ENCODE measurements at regions of chr10 and their contacts with region 1.

Region 1: DNA sequence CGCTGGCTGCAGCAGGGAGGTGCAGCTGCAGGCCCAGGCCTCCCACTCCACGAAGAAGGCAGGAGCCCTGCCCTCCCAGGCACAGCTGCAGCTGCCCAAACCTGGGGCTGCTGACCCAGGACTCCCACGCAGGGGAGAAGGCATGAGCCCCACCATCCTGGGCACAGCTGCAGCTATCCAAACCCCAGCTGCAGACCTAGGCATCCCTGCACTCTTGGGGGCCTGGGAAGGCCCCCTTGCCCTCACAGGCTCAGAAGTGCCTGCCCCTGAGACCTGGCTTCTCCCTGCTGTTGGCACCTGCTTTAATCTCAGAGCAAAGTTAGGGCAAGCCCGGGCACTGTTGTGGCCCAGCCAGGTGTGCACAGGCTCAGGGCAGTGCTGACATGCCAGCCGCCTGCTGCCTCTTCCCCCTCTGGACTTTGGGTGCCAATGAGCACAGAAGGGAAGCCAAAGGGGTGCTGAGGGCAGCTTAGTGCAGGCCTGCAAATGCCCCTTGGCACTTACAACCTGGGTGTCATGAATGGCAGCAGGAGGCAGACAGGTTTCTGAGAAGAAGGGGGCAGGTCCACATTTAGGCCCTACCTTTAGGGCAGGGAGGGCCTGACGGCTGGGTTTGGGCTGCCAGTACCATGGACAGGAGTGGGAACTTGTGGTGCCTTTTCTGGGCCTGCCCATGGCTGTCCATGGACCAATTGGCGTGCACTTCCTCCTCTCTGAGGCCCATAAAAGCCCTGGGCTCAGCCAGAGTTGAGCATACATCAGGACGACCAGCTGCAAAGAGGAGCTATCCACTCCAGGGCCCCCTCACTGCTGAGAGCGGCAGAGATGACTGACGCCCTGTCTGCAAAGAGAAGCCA is 31.1 kb downstream of the CRTAC1 start:
- DNase-seq: no peak
- H3K4me3 ChIP-seq: no peak overlapping the region
- H3K27ac ChIP-seq: no peak overlapping the region
- H3K4me1 ChIP-seq: no peaks in the 10 kb centered on the region
- H3K27me3 ChIP-seq: no peaks in the 10 kb centered on the region
- CTCF ChIP-seq: no peak

Region 2: DNA sequence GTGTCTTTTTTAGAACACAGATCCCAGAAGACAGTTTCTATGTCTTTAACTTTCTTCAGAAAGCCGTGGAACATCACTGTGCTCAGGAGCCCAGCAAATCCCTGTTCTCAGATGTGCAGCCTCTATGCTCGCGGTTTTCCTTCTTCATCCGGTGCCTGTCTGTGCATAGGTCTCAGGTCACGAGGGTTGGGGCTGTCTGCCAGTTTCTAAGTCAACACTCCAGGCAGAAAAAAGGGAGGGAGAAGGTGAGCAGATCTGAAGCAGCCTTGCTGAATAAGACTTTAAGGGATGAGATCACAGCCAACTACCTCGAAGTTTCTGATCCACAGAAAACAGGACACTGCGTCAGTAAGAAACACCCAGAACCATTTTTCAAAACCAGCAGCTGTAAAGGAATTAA is 37.3 kb before region 1 on chr10:
- CTCF ChIA-PET with region 1: no interaction called
- dilution Hi-C with region 1: loop called (anchors 5 kb)
- in situ Hi-C with region 1: no loop called
- intact Hi-C with region 1: no loop called
- DNase-seq: no peak
- H3K4me3 ChIP-seq: no peak overlapping the region
- H3K27ac ChIP-seq: no peak overlapping the region
- H3K4me1 ChIP-seq: no peaks in the 10 kb centered on the region
- H3K27me3 ChIP-seq: peaks cover 7% of the 10 kb centered on the region
- CTCF ChIP-seq: no peak

Region 3: DNA sequence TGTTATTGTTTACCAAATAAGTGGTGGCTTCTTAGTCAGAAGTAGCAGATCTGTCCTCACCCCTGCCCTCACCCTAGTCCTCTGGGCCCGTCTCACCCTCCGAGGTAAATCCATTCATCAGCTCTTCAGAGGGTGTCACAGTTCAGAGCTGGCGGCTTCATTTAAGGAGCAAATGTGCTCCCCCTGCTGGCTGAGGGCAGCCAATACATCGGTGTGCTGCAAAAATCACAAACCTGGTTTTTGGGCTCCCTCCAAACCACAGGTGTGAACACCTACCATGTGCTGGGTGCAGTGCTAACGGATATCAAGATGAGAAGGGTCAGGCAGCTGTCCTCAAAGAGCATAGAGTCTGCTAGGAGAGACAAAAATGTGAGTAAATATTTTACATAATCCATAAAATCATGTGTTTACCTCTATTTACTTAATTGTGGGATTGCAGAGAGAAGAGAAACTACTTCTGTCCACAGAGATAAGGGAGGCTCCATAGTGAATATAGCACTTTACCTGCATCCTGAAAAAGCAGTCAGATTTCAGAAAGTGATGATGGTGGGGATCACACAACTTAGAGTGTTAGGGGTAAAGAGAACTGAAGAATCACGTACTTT is 46.6 kb after region 1 on chr10:
- CTCF ChIA-PET with region 1: no interaction called
- dilution Hi-C with region 1: loop called (anchors 5 kb)
- in situ Hi-C with region 1: no loop called
- intact Hi-C with region 1: no loop called
- DNase-seq: peak; percentile 53
- H3K4me3 ChIP-seq: no peak overlapping the region
- H3K27ac ChIP-seq: no peak overlapping the region
- H3K4me1 ChIP-seq: no peaks in the 10 kb centered on the region
- H3K27me3 ChIP-seq: no peaks in the 10 kb centered on the region
- CTCF ChIP-seq: peak; percentile 90 to 95

Region 4: DNA sequence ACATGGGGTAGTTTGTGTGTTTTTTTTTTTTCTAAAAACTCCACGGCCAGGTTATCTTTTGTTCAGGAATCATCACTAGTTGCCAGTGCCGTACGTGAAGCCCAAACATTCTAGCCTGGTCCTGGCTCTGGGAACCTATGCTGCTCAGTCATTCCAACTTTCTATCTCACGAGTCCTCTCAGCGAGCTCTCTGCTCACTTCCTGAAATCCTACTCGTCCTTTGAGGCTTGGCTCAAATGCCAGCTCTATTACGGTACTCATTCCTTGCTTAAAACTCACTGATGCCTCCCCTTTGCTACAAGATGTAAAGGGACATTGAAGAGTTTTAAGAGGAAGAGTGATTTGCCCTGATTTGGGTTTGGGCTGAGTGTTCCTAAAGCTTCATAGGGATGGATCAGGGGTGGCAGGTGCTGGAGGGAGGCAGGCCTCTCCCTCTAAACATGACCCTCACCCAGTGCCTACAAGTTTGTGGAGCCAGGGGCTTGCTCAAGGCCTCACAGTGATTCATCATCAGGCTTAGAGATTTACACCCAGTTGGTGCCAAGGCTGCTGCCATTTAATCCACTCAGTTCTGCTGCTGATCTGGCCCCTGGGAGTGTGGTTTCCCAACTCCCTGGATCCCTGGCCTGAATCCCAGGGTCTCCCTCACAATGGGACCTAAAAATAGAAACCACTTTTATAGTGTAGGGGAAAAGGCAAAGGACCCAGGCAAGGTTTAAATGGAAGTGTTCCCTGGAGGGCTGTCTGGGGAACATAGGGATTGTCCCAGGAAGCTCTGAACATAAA is 89.1 kb after region 1 on chr10:
- CTCF ChIA-PET with region 1: no interaction called
- dilution Hi-C with region 1: no loop called
- in situ Hi-C with region 1: no loop called
- intact Hi-C with region 1: no loop called
- DNase-seq: no peak
- H3K4me3 ChIP-seq: no peak overlapping the region
- H3K27ac ChIP-seq: no peak overlapping the region
- H3K4me1 ChIP-seq: no peaks in the 10 kb centered on the region
- H3K27me3 ChIP-seq: no peaks in the 10 kb centered on the region
- CTCF ChIP-seq: no peak